ENCODE measurements at regions of chr10 and their contacts with region 1.

Region 1: DNA sequence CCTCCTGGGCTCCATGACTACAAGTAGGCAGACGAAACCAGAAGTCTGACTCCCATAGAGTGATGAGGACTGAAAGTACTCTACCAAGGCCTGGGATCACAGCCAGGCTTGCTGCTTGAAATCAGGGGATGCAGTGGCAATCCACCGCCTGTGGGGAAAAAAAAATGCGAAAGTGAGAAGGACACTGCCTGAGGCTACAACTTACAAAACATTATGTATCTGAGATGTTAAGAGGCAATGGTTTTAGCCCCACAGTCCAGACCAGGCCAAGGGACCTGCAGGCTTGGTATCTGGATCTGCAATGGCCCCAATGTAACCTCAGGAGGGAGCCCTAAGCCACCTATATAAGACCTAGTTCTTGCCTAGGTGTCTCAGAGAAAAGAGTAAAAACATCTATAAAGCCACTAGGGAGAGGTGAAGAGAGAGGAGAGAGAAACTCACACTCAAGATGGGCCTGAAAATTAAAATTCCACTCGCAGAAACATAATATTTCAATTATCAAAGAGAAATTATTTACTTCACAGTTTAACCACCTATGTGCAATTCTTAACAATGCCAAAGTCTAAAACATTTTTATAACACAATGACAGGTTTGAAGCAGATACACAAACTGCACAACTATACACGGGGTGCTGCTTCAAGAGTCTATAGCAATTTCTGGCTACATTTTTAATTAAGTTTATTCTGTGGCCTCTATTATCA is 13.9 kb downstream of the DNAJC1 start:
- DNase-seq: peak; percentile 53
- ATAC-seq: peak; percentile 100
- H3K4me3 ChIP-seq: no peak overlapping the region
- H3K27ac ChIP-seq: no peak overlapping the region
- H3K4me1 ChIP-seq: no peaks in the 10 kb centered on the region
- H3K27me3 ChIP-seq: no peaks in the 10 kb centered on the region
- CTCF ChIP-seq: peak; percentile 79
- EP300 ChIP-seq: no peak
- POLR2A ChIP-seq: no peak
- RAD21 ChIP-seq: peak; percentile 55; the same call in 1 of the 2 replicates

Region 2: DNA sequence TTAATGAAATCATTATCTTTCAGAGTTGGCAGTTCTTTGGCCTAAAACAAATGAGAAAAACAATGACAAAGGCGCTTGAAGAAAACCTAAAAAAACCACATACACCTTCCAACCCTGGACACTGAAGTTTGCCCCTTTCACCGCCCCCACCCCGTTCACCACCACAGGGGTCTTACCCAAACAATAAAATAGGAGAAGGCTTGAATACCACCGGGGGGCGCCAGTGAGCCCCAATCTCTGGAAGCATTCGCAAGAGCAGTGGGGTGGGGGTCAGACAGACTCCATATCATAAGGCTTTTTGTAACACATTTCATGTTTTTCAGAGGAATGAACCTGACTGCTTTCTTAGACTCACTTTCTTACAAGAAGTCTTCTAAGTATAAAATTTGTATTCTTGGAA is 561.1 kb after region 1 on chr10:
- CTCF ChIA-PET with region 1: no interaction called
- POLR2A ChIA-PET with region 1: no interaction called
- in situ Hi-C with region 1: loop called (anchors 25 kb)
- intact Hi-C with region 1: no loop called
- DNase-seq: peak; percentile 40
- ATAC-seq: peak; percentile 42; the same call in 1 of the 3 replicates
- H3K4me3 ChIP-seq: no peak overlapping the region
- H3K27ac ChIP-seq: no peak overlapping the region
- H3K4me1 ChIP-seq: no peaks in the 10 kb centered on the region
- H3K27me3 ChIP-seq: no peaks in the 10 kb centered on the region
- CTCF ChIP-seq: peak; percentile 52
- EP300 ChIP-seq: no peak
- POLR2A ChIP-seq: no peak
- RAD21 ChIP-seq: no peak

Region 3: GRCh38 chr10:23067939-23068775 is 1078.6 kb after region 1 on chr10:
- CTCF ChIA-PET with region 1: interaction called, 5 read pairs
- POLR2A ChIA-PET with region 1: no interaction called
- in situ Hi-C with region 1: loop called (anchors 5 kb)
- intact Hi-C with region 1: loop called (anchors 1 kb)
- DNase-seq: peak; percentile 51
- ATAC-seq: peak; percentile 95
- H3K4me3 ChIP-seq: no peak overlapping the region
- H3K27ac ChIP-seq: no peak overlapping the region
- H3K4me1 ChIP-seq: no peaks in the 10 kb centered on the region; the same call in 1 of the 2 replicates
- H3K27me3 ChIP-seq: 0 out of 5 replicates have a peak, but pooled peaks cover 0 to 5% of the 10 kb centered on the region in 2 experiments
- CTCF ChIP-seq: peak; percentile 78
- EP300 ChIP-seq: no peak
- POLR2A ChIP-seq: no peak
- RAD21 ChIP-seq: 0 out of 2 replicates have a peak, but pooled peaks have one; percentile 15

Measured in HepG2 (cell line).